ENCODE measurements at regions of chr14 and their contacts with region 1.

Region 1: DNA sequence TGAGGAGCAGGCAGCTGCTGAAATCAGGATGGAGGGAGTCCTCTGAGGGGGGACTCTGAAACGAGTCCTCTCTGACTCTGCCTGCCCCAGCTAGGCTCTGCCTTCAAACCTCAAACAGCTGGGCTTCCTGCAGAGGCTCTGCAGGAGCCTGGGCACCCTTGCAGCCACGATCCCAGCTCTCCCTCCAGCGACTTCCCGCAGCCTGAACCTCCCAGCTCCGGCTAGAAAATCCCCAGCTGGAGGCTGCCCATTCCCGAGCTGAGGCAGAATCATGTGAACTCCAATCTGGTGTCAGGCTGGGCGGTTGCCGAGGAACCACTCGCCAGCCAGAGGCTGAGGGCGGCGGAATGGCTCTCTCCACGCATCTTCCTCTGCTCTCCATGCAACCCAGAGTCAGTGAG is at the start of gene GPR68:
- DNase-seq: no peak
- H3K4me3 Mint-ChIP-seq: peak within 1 kb of the TSS; percentile 96
- H3K27ac Mint-ChIP-seq: peak within 1 kb of the TSS; percentile 97
- H3K4me1 Mint-ChIP-seq: peaks cover 82% of the 10 kb centered on the region
- H3K27me3 Mint-ChIP-seq: no peaks in the 10 kb centered on the region
- total RNA-seq, gene GPR68: 36.9 to 39.8 TPM

Region 2: GRCh38 chr14:91193069-91193468 is 51.4 kb before region 1 on chr14:
- CTCF ChIA-PET with region 1: interaction called, 11 read pairs
- POLR2A ChIA-PET with region 1: interaction called, 92 read pairs
- DNase-seq: no peak
- H3K4me3 Mint-ChIP-seq: no peak overlapping the region
- H3K27ac Mint-ChIP-seq: no peak overlapping the region
- H3K4me1 Mint-ChIP-seq: peaks cover 49% of the 10 kb centered on the region
- H3K27me3 Mint-ChIP-seq: no peaks in the 10 kb centered on the region

Region 3: GRCh38 chr14:91228112-91229004 is 16.1 kb before region 1 on chr14:
- CTCF ChIA-PET with region 1: interaction called, 66 read pairs
- POLR2A ChIA-PET with region 1: interaction called, 886 read pairs
- DNase-seq: peak; percentile 88
- H3K4me3 Mint-ChIP-seq: peak overlapping the region; percentile 62
- H3K27ac Mint-ChIP-seq: peak overlapping the region; percentile 100
- H3K4me1 Mint-ChIP-seq: peaks cover 91% of the 10 kb centered on the region
- H3K27me3 Mint-ChIP-seq: no peaks in the 10 kb centered on the region

Region 4: DNA sequence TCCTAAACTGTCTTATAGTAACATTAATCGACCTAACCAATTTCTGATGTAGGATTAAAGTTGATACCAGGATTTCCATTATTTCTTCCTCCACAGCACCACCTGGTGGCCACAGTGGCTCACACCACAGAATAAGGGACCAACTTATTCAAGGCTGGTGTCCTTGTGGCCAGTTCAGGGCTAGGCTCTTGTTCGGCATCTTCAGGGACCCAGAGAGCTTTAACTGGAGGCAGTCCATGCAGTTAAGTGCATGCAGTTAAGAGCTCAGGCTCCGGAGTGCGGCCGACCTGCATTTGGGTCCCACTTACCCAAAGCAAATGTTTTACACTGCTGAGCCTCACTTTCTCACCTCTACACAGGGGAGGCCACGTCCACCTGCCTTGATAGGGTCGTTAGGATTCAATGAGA is 42.0 kb after region 1 on chr14:
- CTCF ChIA-PET with region 1: interaction called, 12 read pairs
- POLR2A ChIA-PET with region 1: interaction called, 25 read pairs
- DNase-seq: peak; percentile 85
- H3K4me3 Mint-ChIP-seq: no peak overlapping the region
- H3K27ac Mint-ChIP-seq: peak overlapping the region; percentile 59
- H3K4me1 Mint-ChIP-seq: peaks cover 17% of the 10 kb centered on the region
- H3K27me3 Mint-ChIP-seq: no peaks in the 10 kb centered on the region

Region 5: GRCh38 chr14:91350813-91351511 is 106.5 kb after region 1 on chr14:
- CTCF ChIA-PET with region 1: no interaction called
- POLR2A ChIA-PET with region 1: interaction called, 17 read pairs
- DNase-seq: peak; percentile 76
- H3K4me3 Mint-ChIP-seq: peak overlapping the region; percentile 71
- H3K27ac Mint-ChIP-seq: peak overlapping the region; percentile 96
- H3K4me1 Mint-ChIP-seq: peaks cover 90% of the 10 kb centered on the region
- H3K27me3 Mint-ChIP-seq: no peaks in the 10 kb centered on the region